A673 (cell line): ENCODE measurements at regions of chr17 and their contacts with region 1.

Region 1: GRCh38 chr17:76005263-76006149 is 4.9 kb downstream of the CDK3 start:
- DNase-seq: peak; percentile 79
- H3K4me3 ChIP-seq: no peak overlapping the region
- H3K27ac ChIP-seq: no peak overlapping the region
- H3K4me1 ChIP-seq: no peaks in the 10 kb centered on the region
- H3K27me3 ChIP-seq: no peaks in the 10 kb centered on the region
- CTCF ChIP-seq: peak; percentile 82

Region 2: GRCh38 chr17:75888511-75888910 is 117.0 kb before region 1 on chr17:
- CTCF ChIA-PET with region 1: interaction called, 11 read pairs
- POLR2A ChIA-PET with region 1: no interaction called
- intact Hi-C with region 1: no loop called
- DNase-seq: no peak
- H3K4me3 ChIP-seq: no peak overlapping the region
- H3K27ac ChIP-seq: no peak overlapping the region
- H3K4me1 ChIP-seq: no peaks in the 10 kb centered on the region
- H3K27me3 ChIP-seq: no peaks in the 10 kb centered on the region
- CTCF ChIP-seq: no peak

Region 3: DNA sequence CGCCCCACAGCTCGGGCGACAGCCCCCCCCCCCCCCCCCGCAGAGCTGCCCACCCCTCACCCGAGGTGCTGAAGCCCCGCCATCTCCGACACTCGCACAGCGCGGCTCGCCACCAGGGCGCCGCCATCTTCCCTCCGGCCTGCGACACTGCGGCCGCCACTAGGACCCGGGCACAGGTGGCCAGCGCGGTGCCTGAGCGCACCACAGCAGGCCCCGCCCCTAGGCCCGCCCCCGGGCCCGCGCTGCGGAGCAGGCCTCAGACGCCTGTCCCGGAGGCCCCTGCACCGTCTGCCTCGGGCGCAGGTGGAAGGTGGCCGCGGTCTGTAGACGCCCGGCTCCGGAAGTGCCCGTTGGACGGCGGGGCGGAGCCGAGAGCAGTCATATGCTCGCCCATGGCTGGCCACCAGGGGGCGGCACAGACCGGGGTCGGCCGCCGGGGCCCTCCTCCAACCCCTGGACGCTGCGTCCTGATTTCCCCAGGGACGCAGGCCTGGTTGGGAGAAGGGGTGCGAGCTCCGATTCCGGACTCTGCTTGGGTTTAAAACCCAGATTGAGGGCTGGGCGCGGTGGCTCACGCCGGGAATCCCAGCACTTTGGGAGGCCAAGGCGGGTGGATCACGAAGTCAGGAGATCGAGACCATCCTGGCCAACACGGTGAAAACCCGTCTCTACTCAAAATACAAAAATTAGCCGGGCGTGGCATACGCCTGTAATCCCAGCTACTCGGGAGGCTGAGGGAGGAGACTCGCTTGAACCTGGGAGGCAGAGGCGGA is 100.6 kb before region 1 on chr17 and contains the start of gene MRPL38:
- CTCF ChIA-PET with region 1: interaction called, 10 read pairs
- POLR2A ChIA-PET with region 1: no interaction called
- intact Hi-C with region 1: loop called (anchors 1 kb)
- DNase-seq: peak; percentile 97
- H3K4me3 ChIP-seq: peak within 1 kb of the TSS; percentile 91
- H3K27ac ChIP-seq: peak within 1 kb of the TSS; percentile 86
- H3K4me1 ChIP-seq: peaks cover 8% of the 10 kb centered on the region
- H3K27me3 ChIP-seq: no peaks in the 10 kb centered on the region
- CTCF ChIP-seq: peak; percentile 95
- total RNA-seq, gene MRPL38: 166 and 167 TPM in 2 replicates